ENCODE measurements at regions of chr12 and their contacts with region 1.

Region 1: DNA sequence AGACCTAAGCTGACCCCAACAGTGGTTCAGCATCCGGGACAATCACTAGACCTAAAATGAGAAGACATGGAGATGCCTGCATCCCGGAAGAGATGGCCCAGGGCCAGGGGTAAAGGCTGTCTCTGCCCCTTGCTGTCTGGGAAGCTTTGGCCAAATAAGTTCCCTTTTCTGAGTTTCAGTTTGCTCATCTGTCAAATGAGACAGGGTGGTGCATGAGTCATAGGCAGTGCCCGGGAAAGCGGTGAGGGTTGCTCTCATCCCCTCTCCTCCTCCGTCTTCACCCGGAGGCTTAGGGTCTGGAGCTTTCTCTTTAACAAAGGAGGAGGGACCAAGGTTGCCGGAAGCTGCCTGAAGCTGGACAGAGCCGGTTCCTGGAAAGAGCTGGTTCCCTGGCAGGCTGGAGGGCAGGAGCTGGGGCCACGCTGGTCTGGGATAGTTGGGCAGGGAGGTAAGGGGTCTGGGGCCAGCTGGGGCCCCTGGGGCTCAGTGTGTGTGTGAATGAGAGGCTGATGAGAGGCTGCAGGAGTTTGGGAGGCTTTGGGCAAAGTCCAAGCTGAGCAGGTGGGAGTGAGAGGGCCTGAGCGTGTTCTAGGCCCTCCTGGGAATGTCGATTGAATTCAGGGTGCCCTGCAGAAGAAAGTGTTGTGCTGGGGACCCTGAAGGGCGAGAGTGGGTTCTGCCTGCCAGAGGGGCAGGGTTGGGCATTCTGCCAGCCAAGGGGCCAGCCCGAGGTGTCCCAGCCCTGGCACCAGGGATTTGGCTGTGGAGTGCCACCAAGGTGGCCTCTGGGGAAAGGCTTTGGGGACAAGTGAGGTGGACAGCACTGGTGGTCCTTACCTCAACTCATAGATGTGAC is at the start of gene SDSL:
- DNase-seq: peak; percentile 76 to 83
- H3K4me3 ChIP-seq: peak within 1 kb of the TSS; percentile 81
- H3K27ac ChIP-seq: peak within 1 kb of the TSS; percentile 50
- H3K4me1 ChIP-seq: peaks cover 7% of the 10 kb centered on the region; the same call in 1 of the 2 replicates
- H3K27me3 ChIP-seq: no peaks in the 10 kb centered on the region
- CTCF ChIP-seq: no peak
- total RNA-seq, gene SDSL: 14.2 and 26.6 TPM in 2 replicates

Region 2: DNA sequence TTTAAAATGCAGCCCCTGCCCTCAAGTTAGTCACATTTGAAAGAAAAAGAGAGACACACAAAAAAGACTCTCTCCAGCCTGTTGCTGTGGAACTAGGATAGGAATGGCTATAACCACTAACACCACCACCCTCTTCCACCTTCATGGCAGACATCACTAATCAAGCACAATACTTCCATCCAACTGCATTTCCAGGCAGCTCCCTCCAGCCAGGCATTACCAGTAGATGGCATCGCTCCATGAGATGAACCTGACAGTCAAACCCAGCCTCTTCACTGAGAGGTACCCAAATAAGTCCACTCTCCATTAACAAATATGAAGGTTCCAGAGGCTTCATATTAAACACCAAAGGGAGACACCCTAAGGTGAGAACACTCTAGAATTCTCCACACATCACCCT is 111.8 kb before region 1 on chr12:
- CTCF ChIA-PET with region 1: no interaction called
- POLR2A ChIA-PET with region 1: no interaction called
- intact Hi-C with region 1: loop called (anchors 5 kb)
- DNase-seq: no peak
- H3K4me3 ChIP-seq: no peak overlapping the region
- H3K27ac ChIP-seq: no peak overlapping the region
- H3K4me1 ChIP-seq: no peaks in the 10 kb centered on the region
- H3K27me3 ChIP-seq: no peaks in the 10 kb centered on the region
- CTCF ChIP-seq: peak; percentile 40; the same call in 1 of the 2 replicates

Region 3: GRCh38 chr12:113334786-113335540 is 87.3 kb before region 1 on chr12 and contains the start of gene SLC8B1:
- CTCF ChIA-PET with region 1: no interaction called
- POLR2A ChIA-PET with region 1: no interaction called
- intact Hi-C with region 1: loop called (anchors 5 kb)
- DNase-seq: peak; percentile 61 to 85
- H3K4me3 ChIP-seq: peak within 1 kb of the TSS; percentile 79
- H3K27ac ChIP-seq: peak within 1 kb of the TSS; percentile 30; the same call in 1 of the 2 replicates
- H3K4me1 ChIP-seq: no peaks in the 10 kb centered on the region; the same call in 1 of the 2 replicates
- H3K27me3 ChIP-seq: no peaks in the 10 kb centered on the region
- CTCF ChIP-seq: no peak
- total RNA-seq, gene SLC8B1: 29.0 and 39.1 TPM in 2 replicates

Region 4: DNA sequence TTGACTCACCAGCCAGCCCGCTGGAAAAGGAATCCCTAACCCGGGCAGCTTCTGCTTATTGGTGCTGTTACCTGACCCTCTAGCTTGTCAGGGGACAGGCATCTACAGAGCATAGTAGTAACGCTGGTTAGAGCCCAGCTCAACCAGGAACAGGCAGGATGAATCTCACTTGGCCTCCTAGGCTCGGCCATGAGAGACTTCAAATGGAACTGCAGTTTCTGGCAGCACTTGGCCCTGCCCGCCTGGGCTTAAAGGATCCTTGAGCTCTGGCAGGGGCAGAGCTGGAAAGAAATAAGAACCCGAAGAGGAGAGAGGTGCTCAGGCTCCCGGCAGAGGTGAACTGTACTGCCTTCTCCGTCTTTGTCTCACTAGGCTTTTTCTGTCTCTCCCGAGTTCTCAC is 51.7 kb after region 1 on chr12:
- CTCF ChIA-PET with region 1: no interaction called
- POLR2A ChIA-PET with region 1: interaction called, 11 read pairs
- intact Hi-C with region 1: no loop called
- DNase-seq: peak; percentile 9 to 39
- H3K4me3 ChIP-seq: no peak overlapping the region
- H3K27ac ChIP-seq: no peak overlapping the region
- H3K4me1 ChIP-seq: no peaks in the 10 kb centered on the region
- H3K27me3 ChIP-seq: peaks cover 90% of the 10 kb centered on the region
- CTCF ChIP-seq: no peak

Measured in PC-9 (cell line).